Dendritic cell treated with granulocyte-macrophage colony-stimulating factor and Interleukin-4, amounts not matched to agents 40 ng/mL and 50 ng/mL, for 4 days (primary cell): ENCODE measurements at regions of chr9 and their contacts with region 1.

Region 1: GRCh38 chr9:136991993-136992818 is at the start of gene PAXX:
- H3K4me3 Mint-ChIP-seq: peak within 1 kb of the TSS; percentile 90
- H3K27ac Mint-ChIP-seq: peak within 1 kb of the TSS; percentile 88
- H3K4me1 Mint-ChIP-seq: peaks cover 50% of the 10 kb centered on the region
- H3K27me3 Mint-ChIP-seq: peaks cover 58% of the 10 kb centered on the region

Region 2: DNA sequence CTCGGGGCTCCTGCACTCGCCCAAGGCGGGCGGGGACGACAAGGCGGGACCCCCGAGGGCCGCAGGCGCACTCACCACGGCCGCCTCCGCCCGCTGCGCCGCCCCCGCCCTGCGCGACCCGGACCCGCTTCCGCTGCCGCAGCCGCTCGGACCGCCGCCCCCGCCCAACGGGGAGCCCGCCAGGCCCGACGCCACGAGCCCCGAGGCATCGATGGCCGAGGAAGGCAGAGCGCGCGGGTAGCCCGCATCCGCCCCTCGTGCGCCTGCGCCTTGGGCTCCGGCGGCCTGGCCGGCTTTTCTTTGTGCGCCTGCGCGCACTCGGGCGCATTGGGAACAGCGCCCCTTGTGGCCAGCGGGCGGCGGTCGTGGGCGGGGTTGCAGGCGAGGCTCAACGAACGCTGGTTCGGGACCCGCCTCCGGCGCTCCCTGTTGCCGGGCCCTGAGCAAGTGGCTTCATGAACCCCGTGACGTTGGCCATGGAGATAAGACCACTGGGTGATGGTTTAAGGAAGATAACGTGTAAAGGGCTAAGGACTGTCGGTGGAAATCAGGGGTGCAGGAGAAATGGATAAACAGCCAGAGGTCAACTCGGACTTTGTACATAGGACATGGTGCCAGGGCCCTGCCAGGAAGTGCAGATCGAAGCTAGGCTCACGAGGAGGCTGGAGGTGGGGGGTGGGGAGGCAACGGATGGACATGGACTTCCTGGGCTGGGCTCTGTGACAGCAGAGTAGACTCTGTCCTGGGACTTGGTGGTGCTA is 47.5 kb before region 1 on chr9 and contains the starts of genes C8G and FBXW5:
- intact Hi-C with region 1: loop called (anchors 10 kb)
- H3K4me3 Mint-ChIP-seq: peak within 1 kb of the TSS; percentile 77
- H3K27ac Mint-ChIP-seq: peak within 1 kb of the TSS; percentile 69
- H3K4me1 Mint-ChIP-seq: peaks cover 43% of the 10 kb centered on the region
- H3K27me3 Mint-ChIP-seq: no peaks in the 10 kb centered on the region

Region 3: DNA sequence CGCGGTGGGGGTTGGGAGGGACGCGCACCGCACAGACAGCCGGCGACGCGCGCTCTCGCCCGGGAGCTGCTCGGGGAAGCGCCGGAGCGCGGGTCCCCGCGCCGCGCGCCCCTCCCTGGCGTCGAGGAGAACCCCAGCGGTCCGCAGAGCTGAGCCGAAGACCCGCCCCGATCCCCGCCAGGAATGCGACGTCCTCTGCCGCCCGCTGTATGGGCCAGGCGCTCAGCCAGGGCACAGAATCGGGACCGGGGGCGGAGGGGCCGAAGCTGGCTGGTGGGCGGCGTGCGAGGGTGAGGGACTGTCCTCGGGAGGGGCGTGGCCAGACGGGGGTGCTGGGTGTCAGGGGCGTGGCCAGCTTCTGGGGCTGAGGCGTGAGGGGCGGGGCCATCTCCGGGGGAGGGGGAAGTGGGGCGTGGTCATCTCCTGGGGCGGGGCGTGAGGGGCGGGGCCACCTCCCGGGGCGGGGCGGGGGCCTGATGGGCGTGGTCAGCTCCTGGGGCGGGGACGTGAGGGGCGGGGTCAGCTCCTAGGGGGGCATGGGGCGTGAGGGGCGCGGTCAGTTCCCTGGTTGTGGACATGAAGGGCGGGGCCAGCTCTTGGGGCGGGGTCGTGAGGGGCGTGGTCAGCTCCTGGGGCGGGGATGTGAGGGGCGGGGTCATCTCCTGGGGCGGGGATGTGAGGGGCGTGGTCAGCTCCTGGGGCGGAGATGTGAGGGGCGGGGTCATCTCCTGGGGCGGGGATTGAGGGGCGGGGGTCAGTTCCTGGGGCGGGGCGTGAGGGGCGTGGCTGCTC is 13.9 kb before region 1 on chr9:
- intact Hi-C with region 1: loop called (anchors 1 kb)
- H3K4me3 Mint-ChIP-seq: peak overlapping the region; percentile 23
- H3K27ac Mint-ChIP-seq: no peak overlapping the region
- H3K4me1 Mint-ChIP-seq: peaks cover 31% of the 10 kb centered on the region
- H3K27me3 Mint-ChIP-seq: peaks cover 69% of the 10 kb centered on the region